ENCODE measurements at regions of chr12 and their contacts with region 1.

Region 1: DNA sequence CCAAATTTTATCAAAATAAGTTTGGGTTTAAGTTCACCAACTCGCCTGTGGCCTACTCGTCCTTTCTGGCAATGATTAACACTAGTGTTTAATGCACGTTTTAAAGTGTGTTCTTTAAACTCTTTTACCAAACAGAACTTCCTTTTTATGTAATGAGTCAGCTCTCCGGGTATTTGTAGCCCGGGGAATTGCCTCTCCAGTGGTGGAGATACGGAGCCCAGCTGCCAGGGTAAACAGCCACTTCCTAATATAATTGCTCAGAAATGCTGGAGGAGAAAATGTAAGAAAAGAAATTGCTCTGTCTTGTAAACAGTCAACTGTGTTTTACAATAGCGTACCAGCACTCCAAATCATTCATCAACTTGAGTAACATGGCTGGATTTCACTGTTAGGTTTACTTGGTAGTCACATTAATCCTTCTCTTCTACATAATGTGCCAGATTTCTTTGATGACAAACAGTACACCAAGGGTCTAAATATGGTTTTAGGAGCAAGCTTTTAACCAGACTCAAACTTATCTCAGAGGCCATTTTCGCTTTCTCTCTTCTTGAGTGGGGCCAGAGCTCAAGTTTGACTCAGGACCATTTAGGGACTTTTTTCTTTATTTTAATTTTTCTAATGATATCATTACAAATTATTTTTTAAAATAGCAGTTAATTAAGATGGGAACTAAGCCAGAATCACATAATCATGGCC is 101.2 kb upstream of the SLC38A2 start:
- DNase-seq: peak; percentile 26
- ATAC-seq: no peak
- H3K4me3 ChIP-seq: peak overlapping the region in 3 of 5 experiments; percentile 28 to 43 (median 29)
- H3K4me3 Mint-ChIP-seq: peak overlapping the region; percentile 70
- H3K27ac ChIP-seq: peak overlapping the region in 1 of 2 donors; percentile 62
- H3K27ac Mint-ChIP-seq: peak overlapping the region; percentile 72
- H3K4me1 ChIP-seq: peaks cover 12 to 21% of the 10 kb centered on the region in 2 donors
- H3K4me1 Mint-ChIP-seq: peaks cover 18% of the 10 kb centered on the region
- H3K27me3 ChIP-seq: no peaks in the 10 kb centered on the region
- H3K27me3 Mint-ChIP-seq: no peaks in the 10 kb centered on the region
- CTCF ChIP-seq: no peak

Region 2: DNA sequence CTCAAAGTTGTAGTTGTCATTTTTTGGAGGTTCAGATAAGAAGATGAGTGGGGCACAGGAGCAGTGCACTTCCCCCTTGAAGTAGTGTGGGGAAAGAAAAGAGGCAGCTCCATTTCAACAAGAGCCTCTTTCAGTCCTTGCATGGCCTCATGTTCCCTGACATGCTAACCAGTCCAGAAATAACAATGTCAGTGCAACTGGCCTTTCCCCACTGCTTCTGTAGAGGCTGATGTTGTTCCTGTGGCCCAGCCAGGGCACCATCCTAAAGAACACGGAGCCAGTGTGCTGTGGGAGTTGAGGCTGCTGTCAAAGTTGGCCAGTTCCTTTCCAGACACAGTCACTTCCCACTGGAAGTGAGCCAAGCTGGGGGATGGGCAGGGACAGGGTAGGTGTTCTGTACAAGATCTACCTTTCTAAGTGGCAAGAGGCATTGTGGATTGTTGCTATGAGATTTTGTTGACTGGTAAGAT is 23.5 kb before region 1 on chr12:
- CTCF ChIA-PET with region 1: no interaction called
- POLR2A ChIA-PET with region 1: no interaction called
- intact Hi-C with region 1: no loop called
- DNase-seq: no peak
- ATAC-seq: no peak
- H3K4me3 ChIP-seq: no peak overlapping the region
- H3K4me3 Mint-ChIP-seq: no peak overlapping the region
- H3K27ac ChIP-seq: no peak overlapping the region
- H3K27ac Mint-ChIP-seq: no peak overlapping the region
- H3K4me1 ChIP-seq: peaks cover 6 to 14% of the 10 kb centered on the region in 2 donors
- H3K4me1 Mint-ChIP-seq: peaks cover 15% of the 10 kb centered on the region
- H3K27me3 ChIP-seq: no peaks in the 10 kb centered on the region
- H3K27me3 Mint-ChIP-seq: no peaks in the 10 kb centered on the region
- CTCF ChIP-seq: no peak

Region 3: GRCh38 chr12:46487567-46488131 is 13.9 kb after region 1 on chr12:
- CTCF ChIA-PET with region 1: no interaction called
- POLR2A ChIA-PET with region 1: no interaction called
- intact Hi-C with region 1: loop called (anchors 2 kb)
- DNase-seq: peak; percentile 87
- ATAC-seq: peak; percentile 89
- H3K4me3 ChIP-seq: peak overlapping the region; percentile 7 to 30 (median 27)
- H3K4me3 Mint-ChIP-seq: no peak overlapping the region
- H3K27ac ChIP-seq: peak overlapping the region; percentile 67 to 85
- H3K27ac Mint-ChIP-seq: no peak overlapping the region
- H3K4me1 ChIP-seq: peaks cover 29 to 32% of the 10 kb centered on the region in 2 donors
- H3K4me1 Mint-ChIP-seq: peaks cover 10% of the 10 kb centered on the region
- H3K27me3 ChIP-seq: no peaks in the 10 kb centered on the region
- H3K27me3 Mint-ChIP-seq: no peaks in the 10 kb centered on the region
- CTCF ChIP-seq: peak; percentile 14

Region 4: GRCh38 chr12:46843811-46844210 is 370.0 kb after region 1 on chr12:
- CTCF ChIA-PET with region 1: no interaction called
- POLR2A ChIA-PET with region 1: no interaction called
- intact Hi-C with region 1: no loop called
- DNase-seq: no peak
- ATAC-seq: no peak
- H3K4me3 ChIP-seq: no peak overlapping the region
- H3K4me3 Mint-ChIP-seq: no peak overlapping the region
- H3K27ac ChIP-seq: no peak overlapping the region
- H3K27ac Mint-ChIP-seq: no peak overlapping the region
- H3K4me1 ChIP-seq: no peaks in the 10 kb centered on the region
- H3K4me1 Mint-ChIP-seq: no peaks in the 10 kb centered on the region
- H3K27me3 ChIP-seq: no peaks in the 10 kb centered on the region
- H3K27me3 Mint-ChIP-seq: peaks cover 42% of the 10 kb centered on the region
- CTCF ChIP-seq: no peak

Region 5: GRCh38 chr12:47247433-47247832 is 773.7 kb after region 1 on chr12:
- CTCF ChIA-PET with region 1: no interaction called
- POLR2A ChIA-PET with region 1: no interaction called
- intact Hi-C with region 1: no loop called
- DNase-seq: no peak
- ATAC-seq: no peak
- H3K4me3 ChIP-seq: no peak overlapping the region
- H3K4me3 Mint-ChIP-seq: no peak overlapping the region
- H3K27ac ChIP-seq: no peak overlapping the region
- H3K27ac Mint-ChIP-seq: no peak overlapping the region
- H3K4me1 ChIP-seq: no peaks in the 10 kb centered on the region
- H3K4me1 Mint-ChIP-seq: peaks cover 2% of the 10 kb centered on the region
- H3K27me3 ChIP-seq: no peaks in the 10 kb centered on the region
- H3K27me3 Mint-ChIP-seq: no peaks in the 10 kb centered on the region
- CTCF ChIP-seq: no peak

Measured in B cell (primary cell).